ENCODE measurements at regions of chr3 and their contacts with region 1.

Region 1: GRCh38 chr3:10224784-10225665 is 23.2 kb upstream of the TATDN2 start:
- DNase-seq: no peak
- ATAC-seq: peak; percentile 66
- H3K4me3 ChIP-seq: no peak overlapping the region
- H3K27ac ChIP-seq: peak overlapping the region; percentile 31
- H3K4me1 ChIP-seq: peaks cover 62% of the 10 kb centered on the region
- H3K27me3 ChIP-seq: no peaks in the 10 kb centered on the region
- CTCF ChIP-seq: peak; percentile 73 to 89 (median 87)
- EP300 ChIP-seq: no peak
- POLR2A ChIP-seq: no peak
- RAD21 ChIP-seq: peak; percentile 96

Region 2: DNA sequence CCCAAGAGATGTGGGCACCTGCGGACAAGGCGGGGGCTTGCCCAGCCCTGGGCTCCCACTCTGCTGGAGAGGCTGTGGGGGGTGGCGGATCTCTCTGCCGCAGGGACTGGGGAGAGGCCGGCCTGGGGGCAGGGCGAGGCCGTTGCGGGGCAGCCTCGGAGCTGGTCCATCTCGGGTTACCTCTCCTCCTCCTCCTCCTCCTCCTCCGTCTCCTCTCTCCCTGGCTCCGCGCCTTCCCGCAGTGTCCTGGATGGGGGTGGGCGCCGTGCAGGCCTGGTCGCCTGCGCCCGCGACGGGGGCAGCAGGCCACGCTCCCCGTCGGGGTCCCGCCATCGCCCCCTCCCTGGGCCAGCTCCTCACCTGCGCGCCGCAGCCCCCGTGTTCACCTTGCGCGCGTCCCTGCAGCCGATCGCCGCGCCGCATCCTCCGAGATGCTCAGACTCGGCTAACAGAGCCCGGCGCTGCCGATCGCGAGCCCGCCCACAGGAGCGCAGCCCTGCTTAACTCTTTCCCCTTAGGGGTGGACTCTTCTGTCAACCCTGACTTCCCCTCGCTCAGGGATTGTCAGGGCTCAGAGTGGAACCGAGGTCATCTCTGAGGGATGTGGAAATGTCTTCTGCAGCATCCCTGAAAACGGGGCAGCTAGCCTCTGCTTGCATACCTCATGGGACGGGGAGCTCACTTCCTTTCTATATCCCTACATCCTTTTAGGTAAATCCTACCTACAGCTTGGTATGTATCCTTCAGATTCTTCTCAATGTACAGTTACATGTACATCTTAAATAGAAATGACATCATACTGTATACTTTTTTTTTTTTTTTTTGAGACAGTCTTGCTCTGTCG is 272.8 kb before region 1 on chr3 and contains the start of gene PRRT3:
- CTCF ChIA-PET with region 1: no interaction called
- POLR2A ChIA-PET with region 1: no interaction called
- RAD21 ChIA-PET with region 1: no interaction called
- SMC1A ChIA-PET with region 1: no interaction called
- in situ Hi-C with region 1: no loop called
- intact Hi-C with region 1: loop called (anchors 10 kb)
- DNase-seq: no peak
- ATAC-seq: peak; percentile 96
- H3K4me3 ChIP-seq: peak within 1 kb of the TSS; percentile 82
- H3K27ac ChIP-seq: peak within 1 kb of the TSS; percentile 69
- H3K4me1 ChIP-seq: peaks cover 3% of the 10 kb centered on the region; the same call in 1 of the 2 replicates
- H3K27me3 ChIP-seq: no peaks in the 10 kb centered on the region
- CTCF ChIP-seq: no peak
- EP300 ChIP-seq: no peak
- POLR2A ChIP-seq: peak; percentile 77
- RAD21 ChIP-seq: no peak
- polyA plus RNA-seq, gene PRRT3: 0.53 to 1.1 TPM

Region 3: DNA sequence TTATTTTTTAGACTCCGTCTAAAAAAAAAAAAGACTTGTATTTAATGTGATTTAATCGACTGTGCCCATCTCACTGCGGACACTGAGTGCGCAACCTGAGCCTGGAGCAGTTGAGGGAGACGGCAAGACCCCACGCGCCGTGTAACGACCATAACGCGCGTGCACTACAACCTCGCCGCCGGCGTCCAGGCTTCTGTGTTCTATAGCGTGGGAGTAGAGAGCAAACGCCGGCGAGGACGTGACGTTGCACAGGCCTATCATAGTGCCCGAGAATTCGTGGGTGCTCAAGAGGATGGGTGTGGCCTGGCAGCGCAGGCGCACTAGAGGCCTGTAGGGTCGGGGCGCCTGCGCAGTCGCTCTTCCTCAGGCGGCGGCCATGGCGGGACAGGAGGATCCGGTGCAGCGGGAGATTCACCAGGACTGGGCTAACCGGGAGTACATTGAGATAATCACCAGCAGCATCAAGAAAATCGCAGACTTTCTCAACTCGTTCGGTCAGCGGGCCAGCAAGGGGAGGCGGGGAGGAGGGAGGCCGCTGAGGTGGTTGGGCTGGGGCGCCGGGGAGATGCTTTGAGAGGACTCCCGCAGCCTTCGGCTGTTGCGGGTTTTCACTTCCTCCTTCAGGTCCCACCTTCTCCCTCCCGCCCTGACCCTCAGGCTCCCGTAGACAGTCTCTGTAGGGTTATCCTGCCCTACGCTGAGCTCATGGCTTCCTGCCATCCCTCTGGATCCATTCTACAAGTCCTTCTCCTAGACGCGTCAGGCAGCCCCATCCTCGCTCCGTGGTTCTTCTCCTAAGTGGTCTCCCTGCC is 109.5 kb before region 1 on chr3 and contains the start of gene BRK1:
- CTCF ChIA-PET with region 1: interaction called, 3 read pairs
- POLR2A ChIA-PET with region 1: interaction called, 9 read pairs
- RAD21 ChIA-PET with region 1: interaction called, 10 read pairs
- SMC1A ChIA-PET with region 1: interaction called, 7 read pairs
- in situ Hi-C with region 1: no loop called
- intact Hi-C with region 1: loop called (anchors 10 kb)
- DNase-seq: peak; percentile 94
- ATAC-seq: peak; percentile 95
- H3K4me3 ChIP-seq: peak within 1 kb of the TSS; percentile 89
- H3K27ac ChIP-seq: peak within 1 kb of the TSS; percentile 83
- H3K4me1 ChIP-seq: peaks cover 3% of the 10 kb centered on the region
- H3K27me3 ChIP-seq: no peaks in the 10 kb centered on the region
- CTCF ChIP-seq: no peak
- EP300 ChIP-seq: 0 out of 4 replicates have a peak, but pooled peaks of 1 of the 2 experiments have one; percentile 11
- POLR2A ChIP-seq: peak; percentile 93
- RAD21 ChIP-seq: no peak
- polyA plus RNA-seq, gene BRK1: 309 to 457 TPM

Region 4: GRCh38 chr3:10164546-10165393 is 60.3 kb before region 1 on chr3 and contains the start of gene IRAK2:
- CTCF ChIA-PET with region 1: interaction called, 19 read pairs
- POLR2A ChIA-PET with region 1: interaction called, 5 read pairs
- RAD21 ChIA-PET with region 1: interaction called, 30 read pairs
- SMC1A ChIA-PET with region 1: interaction called, 16 read pairs
- in situ Hi-C with region 1: no loop called
- intact Hi-C with region 1: loop called (anchors 2 kb)
- DNase-seq: no peak
- ATAC-seq: peak; percentile 92
- H3K4me3 ChIP-seq: peak within 1 kb of the TSS; percentile 94
- H3K27ac ChIP-seq: no peak within 1 kb of the TSS
- H3K4me1 ChIP-seq: peaks cover 7% of the 10 kb centered on the region; the same call in 1 of the 2 replicates
- H3K27me3 ChIP-seq: no peaks in the 10 kb centered on the region
- CTCF ChIP-seq: peak; percentile 76 to 86 (median 81)
- EP300 ChIP-seq: no peak
- POLR2A ChIP-seq: peak; percentile 79
- RAD21 ChIP-seq: peak; percentile 22; the same call in 1 of the 2 replicates
- polyA plus RNA-seq, gene IRAK2: 0.48 to 0.88 TPM

Region 5: GRCh38 chr3:10198761-10199649 is 26.0 kb before region 1 on chr3:
- CTCF ChIA-PET with region 1: interaction called, 31 read pairs
- POLR2A ChIA-PET with region 1: interaction called, 64 read pairs
- RAD21 ChIA-PET with region 1: interaction called, 99 read pairs
- SMC1A ChIA-PET with region 1: interaction called, 165 read pairs
- in situ Hi-C with region 1: no loop called
- intact Hi-C with region 1: loop called (anchors 1 kb)
- DNase-seq: peak; percentile 80
- ATAC-seq: peak; percentile 87
- H3K4me3 ChIP-seq: no peak overlapping the region
- H3K27ac ChIP-seq: peak overlapping the region; percentile 62
- H3K4me1 ChIP-seq: peaks cover 48% of the 10 kb centered on the region
- H3K27me3 ChIP-seq: no peaks in the 10 kb centered on the region
- CTCF ChIP-seq: no peak
- EP300 ChIP-seq: peak in 1 of 2 experiments; percentile 68; a peak in 1 of 4 replicates
- POLR2A ChIP-seq: peak; percentile 17; the same call in 1 of the 2 replicates
- RAD21 ChIP-seq: no peak

Region 6: GRCh38 chr3:10395671-10396070 is 170.6 kb after region 1 on chr3:
- CTCF ChIA-PET with region 1: no interaction called
- POLR2A ChIA-PET with region 1: no interaction called
- RAD21 ChIA-PET with region 1: no interaction called
- SMC1A ChIA-PET with region 1: no interaction called
- in situ Hi-C with region 1: no loop called
- intact Hi-C with region 1: no loop called
- DNase-seq: no peak
- ATAC-seq: no peak
- H3K4me3 ChIP-seq: no peak overlapping the region
- H3K27ac ChIP-seq: no peak overlapping the region
- H3K4me1 ChIP-seq: peaks cover under 1% of the 10 kb centered on the region; the same call in 1 of the 2 replicates
- H3K27me3 ChIP-seq: no peaks in the 10 kb centered on the region; a peak in 2 of 4 replicates
- CTCF ChIP-seq: no peak
- EP300 ChIP-seq: no peak
- POLR2A ChIP-seq: no peak
- RAD21 ChIP-seq: no peak

Measured in GM12878 (cell line).